ENCODE measurements at regions of chr22 and their contacts with region 1.

Region 1: DNA sequence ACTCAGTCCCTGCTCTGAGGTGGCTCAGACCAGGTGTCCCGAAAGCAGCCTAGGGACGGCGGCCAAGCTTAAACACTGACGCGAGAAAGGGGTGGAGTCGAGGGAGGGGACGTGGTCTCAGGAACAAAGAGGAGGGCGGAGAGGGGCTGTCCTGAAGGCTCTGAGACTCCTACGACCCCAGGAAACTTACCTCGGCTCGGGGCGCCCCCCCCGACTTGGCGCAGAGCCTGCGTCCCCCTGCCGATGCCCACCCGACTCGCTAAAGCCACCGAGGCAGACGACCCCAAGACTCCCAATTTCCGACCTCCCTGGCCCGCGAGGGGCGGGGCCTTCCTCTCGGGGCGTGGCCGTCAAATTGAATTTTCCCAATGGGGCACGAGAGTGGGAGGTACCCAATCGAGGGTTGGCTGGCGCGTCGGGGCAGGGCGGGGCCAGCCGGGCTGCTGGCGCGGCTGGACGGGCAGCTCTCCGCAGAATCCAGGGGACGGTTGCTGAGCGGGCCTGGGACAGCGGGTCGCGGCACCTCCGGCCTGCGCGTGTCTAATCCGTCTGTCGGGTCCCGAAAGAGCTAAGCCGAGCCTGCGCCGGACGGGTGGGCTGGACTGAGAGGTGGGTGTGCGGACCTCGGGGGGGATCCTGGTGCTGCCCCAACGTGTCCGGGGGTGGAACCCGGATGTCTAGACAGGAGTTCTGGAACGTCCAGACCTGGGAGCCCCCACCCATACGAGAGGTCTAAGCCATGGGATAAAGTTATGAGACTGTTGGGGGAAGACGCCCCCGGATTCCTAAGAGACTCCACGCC is at the start of gene SMTN:
- DNase-seq: peak; percentile 92
- H3K4me3 Mint-ChIP-seq: peak within 1 kb of the TSS; percentile 85
- H3K27ac Mint-ChIP-seq: peak within 1 kb of the TSS; percentile 45
- H3K4me1 Mint-ChIP-seq: peaks cover 30% of the 10 kb centered on the region
- H3K27me3 Mint-ChIP-seq: no peaks in the 10 kb centered on the region
- total RNA-seq, gene SMTN: 55.1 to 57.4 TPM

Region 2: GRCh38 chr22:30591588-30592359 is 489.3 kb before region 1 on chr22 and contains the start of gene PES1:
- CTCF ChIA-PET with region 1: no interaction called
- POLR2A ChIA-PET with region 1: no interaction called
- intact Hi-C with region 1: loop called (anchors 5 kb)
- DNase-seq: peak; percentile 96
- H3K4me3 Mint-ChIP-seq: no peak within 1 kb of the TSS
- H3K27ac Mint-ChIP-seq: no peak within 1 kb of the TSS
- H3K4me1 Mint-ChIP-seq: peaks cover 4% of the 10 kb centered on the region
- H3K27me3 Mint-ChIP-seq: peaks cover 7% of the 10 kb centered on the region
- total RNA-seq, gene PES1: 99.3 to 99.6 TPM

Region 3: DNA sequence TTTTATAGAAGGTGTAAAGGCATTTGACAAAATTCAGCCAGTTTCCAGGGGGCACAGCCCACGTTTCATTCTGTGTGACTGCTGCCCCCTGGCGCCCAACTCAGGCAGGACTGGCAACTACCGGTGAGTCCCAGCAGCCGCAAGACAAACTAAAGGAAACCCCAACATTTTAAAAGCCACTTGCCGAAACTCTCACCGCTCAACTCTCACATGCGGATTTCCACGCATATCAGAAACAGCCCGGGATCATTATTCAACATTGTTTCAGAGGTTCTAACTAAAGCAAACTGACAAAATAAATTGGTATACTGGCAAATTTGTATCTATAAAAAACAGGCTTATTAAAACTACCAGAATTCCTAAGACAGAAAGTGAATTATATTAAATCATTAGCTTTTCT is 160.6 kb before region 1 on chr22:
- CTCF ChIA-PET with region 1: interaction called, 20 read pairs
- POLR2A ChIA-PET with region 1: interaction called, 5 read pairs
- intact Hi-C with region 1: no loop called
- DNase-seq: peak; percentile 87
- H3K4me3 Mint-ChIP-seq: peak overlapping the region; percentile 40
- H3K27ac Mint-ChIP-seq: peak overlapping the region; percentile 3
- H3K4me1 Mint-ChIP-seq: peaks cover 12% of the 10 kb centered on the region
- H3K27me3 Mint-ChIP-seq: no peaks in the 10 kb centered on the region

Region 4: DNA sequence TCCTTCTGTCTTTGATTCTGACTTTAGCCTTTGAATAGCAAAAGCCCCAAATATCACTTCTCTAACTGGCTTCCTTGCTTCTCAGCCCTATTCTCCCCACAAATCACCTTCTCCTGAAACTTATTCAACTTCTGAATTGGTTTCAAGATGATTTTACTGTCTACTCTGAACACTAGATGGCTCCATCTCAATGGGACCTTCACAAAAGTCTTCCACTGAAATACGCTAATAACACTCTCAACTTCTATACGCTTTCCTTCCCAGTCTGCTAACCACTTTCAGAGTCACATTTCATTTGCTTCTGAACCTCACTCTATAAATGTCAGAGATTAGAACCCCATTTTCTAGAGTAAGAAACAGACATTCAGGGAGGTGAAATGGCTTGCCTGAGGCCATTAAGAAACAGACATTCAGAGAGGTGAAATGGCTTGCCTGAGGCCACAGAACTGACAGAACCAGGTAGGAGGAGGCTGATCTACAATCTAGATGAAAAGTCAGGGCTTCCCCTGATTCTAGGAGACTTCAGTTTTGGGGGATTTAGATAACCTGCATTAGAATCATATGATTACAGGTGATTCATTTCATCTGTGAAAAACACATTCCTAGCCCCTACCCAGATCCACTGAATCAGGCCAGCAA is 133.1 kb before region 1 on chr22:
- CTCF ChIA-PET with region 1: interaction called, 23 read pairs
- POLR2A ChIA-PET with region 1: interaction called, 3 read pairs
- intact Hi-C with region 1: loop called (anchors 1 kb)
- DNase-seq: no peak
- H3K4me3 Mint-ChIP-seq: no peak overlapping the region
- H3K27ac Mint-ChIP-seq: no peak overlapping the region
- H3K4me1 Mint-ChIP-seq: peaks cover 33% of the 10 kb centered on the region
- H3K27me3 Mint-ChIP-seq: no peaks in the 10 kb centered on the region

Region 5: DNA sequence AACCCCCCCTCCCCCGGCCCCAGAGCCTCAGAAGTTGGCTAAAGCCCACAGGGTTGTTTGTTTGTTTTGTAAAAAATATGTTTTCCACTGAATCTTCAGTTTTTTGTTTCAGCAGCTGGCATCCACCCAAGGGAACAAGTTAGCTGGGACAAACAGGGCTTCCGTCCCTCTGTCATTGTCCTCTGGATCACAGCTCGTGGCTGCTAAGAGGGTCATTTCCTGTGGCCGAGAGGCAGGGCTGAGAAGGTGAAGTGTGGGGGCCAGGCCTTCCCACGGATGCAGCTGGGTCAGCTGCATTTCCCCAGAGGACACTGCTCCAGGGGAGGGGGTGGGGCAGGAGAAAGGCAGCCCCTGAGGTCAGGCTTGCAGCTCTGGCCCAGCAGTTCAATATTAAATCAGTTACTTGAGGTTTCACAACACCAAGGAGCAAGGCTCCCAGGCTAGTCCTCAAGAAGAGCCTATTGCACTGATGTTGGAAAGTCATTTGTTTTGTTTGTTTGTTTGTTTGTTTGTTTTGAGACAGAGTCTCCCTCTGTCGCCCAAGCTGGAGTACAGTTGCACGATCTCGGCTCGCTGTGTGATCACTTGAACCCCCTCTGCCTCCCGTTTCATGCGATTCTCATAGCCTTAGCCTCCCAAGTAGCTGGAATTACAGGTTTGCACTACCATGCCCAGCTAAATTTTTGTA is 34.4 kb before region 1 on chr22:
- CTCF ChIA-PET with region 1: no interaction called
- POLR2A ChIA-PET with region 1: no interaction called
- intact Hi-C with region 1: no loop called
- DNase-seq: no peak
- H3K4me3 Mint-ChIP-seq: no peak overlapping the region
- H3K27ac Mint-ChIP-seq: no peak overlapping the region
- H3K4me1 Mint-ChIP-seq: no peaks in the 10 kb centered on the region
- H3K27me3 Mint-ChIP-seq: peaks cover 2% of the 10 kb centered on the region

Region 6: GRCh38 chr22:31107178-31107893 is 26.3 kb after region 1 on chr22 and contains the start of gene SELENOM:
- CTCF ChIA-PET with region 1: interaction called, 27 read pairs
- POLR2A ChIA-PET with region 1: interaction called, 3 read pairs
- intact Hi-C with region 1: loop called (anchors 2 kb)
- DNase-seq: peak; percentile 94
- H3K4me3 Mint-ChIP-seq: peak within 1 kb of the TSS; percentile 80
- H3K27ac Mint-ChIP-seq: peak within 1 kb of the TSS; percentile 70
- H3K4me1 Mint-ChIP-seq: peaks cover 22% of the 10 kb centered on the region
- H3K27me3 Mint-ChIP-seq: no peaks in the 10 kb centered on the region
- total RNA-seq, gene SELENOM: 14.1 to 14.3 TPM

Region 7: DNA sequence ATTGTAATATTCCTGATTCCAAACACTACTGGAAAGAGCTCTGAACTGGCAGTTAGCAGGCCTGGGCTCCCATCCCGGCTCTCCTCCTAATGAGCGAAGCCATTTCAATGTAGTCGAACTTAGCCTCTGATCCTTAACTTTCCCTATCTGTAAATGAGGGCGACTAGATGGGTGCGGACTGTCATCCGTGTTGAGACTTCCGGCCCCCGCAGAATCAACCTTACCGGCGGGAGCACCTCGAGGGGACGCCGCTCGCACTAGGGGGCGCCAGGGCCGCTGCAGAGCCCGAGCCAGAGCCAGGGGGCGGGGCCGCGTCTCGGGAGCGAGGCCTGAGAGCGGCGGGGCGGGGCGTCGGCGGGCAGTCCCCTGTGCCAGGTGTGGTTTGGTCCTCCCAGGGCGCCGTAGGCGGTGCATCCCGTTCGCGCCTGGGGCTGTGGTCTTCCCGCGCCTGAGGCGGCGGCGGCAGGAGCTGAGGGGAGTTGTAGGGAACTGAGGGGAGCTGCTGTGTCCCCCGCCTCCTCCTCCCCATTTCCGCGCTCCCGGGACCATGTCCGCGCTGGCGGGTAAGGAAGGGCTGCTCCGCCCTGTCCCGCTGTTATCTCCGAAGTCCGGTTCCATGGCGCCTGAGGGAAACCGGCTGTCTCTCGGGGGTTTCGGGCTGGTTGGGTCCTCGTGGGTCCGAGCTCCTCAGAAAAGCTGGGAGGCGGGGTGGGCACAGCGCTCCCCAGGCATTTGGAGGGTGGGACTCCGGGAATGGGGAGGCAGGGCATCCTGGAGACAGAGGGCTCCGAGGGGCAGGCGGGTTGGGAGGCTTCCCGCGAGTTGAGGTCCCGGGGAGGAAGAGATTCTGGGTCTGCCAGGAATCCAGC is 131.0 kb after region 1 on chr22 and contains the start of gene LIMK2:
- CTCF ChIA-PET with region 1: interaction called, 4 read pairs
- POLR2A ChIA-PET with region 1: interaction called, 9 read pairs
- intact Hi-C with region 1: loop called (anchors 10 kb)
- DNase-seq: peak; percentile 98
- H3K4me3 Mint-ChIP-seq: peak within 1 kb of the TSS; percentile 83
- H3K27ac Mint-ChIP-seq: peak within 1 kb of the TSS; percentile 87
- H3K4me1 Mint-ChIP-seq: peaks cover 53% of the 10 kb centered on the region
- H3K27me3 Mint-ChIP-seq: no peaks in the 10 kb centered on the region
- total RNA-seq, gene LIMK2: 42.0 to 44.7 TPM